Cardiac septum (tissue), 1 donor: ENCODE measurements at regions of chr22 and their contacts with region 1.

Region 1: DNA sequence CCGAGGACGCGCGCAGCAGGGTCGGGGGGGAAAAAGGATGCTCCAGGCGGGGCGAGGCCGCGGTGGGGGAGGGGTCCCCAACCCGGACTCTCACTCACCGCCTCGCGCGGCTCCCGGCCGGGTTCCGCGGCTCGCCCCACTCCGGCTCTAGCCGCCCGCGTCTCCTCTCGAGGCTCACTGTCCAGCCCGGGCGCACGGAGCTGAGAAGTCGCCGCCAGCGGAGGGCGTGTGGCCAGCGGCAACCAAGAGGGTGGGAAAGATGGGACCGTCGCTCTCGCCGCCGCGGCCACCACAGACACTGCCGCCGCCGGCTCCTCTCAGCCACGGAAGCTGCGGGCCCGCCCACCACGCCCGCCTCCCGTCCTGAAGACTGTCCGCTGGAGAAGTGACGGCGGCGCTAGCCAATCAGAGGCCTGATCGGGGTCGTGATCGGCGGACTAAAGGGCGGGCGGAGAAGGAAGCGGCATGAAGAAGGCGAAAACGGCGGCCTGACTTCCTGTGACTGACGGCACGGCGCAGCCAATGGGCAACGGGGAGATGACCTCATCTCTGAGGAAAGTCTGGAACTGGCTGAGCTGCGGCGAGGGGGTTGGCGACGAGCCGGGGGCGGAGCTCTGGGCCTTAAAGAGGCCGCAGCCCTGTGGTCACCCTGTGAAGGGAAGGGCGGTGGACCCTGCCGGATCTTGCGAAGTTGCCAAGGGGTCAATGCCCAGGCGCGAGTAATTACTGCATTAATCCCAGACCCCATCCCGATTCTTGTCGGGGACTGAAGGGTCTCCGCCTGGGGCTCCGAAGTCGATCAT is at the start of gene MRTFA:
- DNase-seq: peak; percentile 100
- total RNA-seq, gene MRTFA: 24.3 TPM

Region 2: DNA sequence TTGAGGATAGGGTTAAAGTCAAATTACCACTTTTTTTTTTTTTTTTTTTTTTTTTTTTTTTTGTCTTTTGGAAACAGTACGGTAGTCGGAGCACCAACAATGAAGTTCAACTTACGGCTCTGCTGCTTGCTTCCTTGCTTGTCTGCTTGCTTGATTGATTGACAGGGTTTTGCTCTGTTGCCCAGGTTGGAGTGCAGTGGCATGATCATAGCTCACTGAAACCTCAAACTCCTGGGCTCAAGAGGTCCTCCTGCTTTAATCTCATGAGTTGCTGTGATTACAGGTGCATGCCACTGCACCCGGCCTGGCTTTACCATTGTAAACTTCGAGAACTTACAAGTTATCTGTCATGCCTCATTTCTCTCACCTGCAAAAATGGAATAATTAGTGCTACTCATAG is 260.4 kb before region 1 on chr22:
- intact Hi-C with region 1: loop called (anchors 10 kb)
- DNase-seq: no peak

Region 3: DNA sequence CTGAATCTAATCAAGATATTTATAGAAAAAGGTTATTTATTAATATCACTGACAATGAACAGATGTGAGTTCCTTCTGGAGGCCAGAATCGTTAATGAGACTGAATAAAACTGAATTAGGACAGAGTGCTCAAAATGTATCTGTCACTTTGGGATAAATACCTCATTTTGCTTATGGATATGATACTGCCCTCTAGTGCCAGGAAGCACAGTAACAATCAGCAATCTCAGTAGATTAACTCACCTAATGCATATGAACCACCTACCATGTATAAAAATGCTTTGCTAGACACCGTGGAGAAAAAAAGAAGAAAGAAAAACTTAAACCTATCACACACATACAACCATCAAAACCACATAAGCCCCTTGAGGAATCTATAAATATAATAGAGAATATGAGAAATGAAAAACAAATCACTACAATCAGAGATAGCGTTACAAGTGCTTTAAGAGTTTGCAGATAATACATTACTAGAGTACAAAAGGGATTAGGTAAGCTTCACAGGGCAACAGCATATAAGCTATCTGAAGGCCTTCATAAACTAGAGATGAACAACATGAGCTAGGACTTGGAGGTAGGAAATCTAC is 148.8 kb before region 1 on chr22:
- intact Hi-C with region 1: loop called (anchors 10 kb)
- DNase-seq: no peak

Region 4: DNA sequence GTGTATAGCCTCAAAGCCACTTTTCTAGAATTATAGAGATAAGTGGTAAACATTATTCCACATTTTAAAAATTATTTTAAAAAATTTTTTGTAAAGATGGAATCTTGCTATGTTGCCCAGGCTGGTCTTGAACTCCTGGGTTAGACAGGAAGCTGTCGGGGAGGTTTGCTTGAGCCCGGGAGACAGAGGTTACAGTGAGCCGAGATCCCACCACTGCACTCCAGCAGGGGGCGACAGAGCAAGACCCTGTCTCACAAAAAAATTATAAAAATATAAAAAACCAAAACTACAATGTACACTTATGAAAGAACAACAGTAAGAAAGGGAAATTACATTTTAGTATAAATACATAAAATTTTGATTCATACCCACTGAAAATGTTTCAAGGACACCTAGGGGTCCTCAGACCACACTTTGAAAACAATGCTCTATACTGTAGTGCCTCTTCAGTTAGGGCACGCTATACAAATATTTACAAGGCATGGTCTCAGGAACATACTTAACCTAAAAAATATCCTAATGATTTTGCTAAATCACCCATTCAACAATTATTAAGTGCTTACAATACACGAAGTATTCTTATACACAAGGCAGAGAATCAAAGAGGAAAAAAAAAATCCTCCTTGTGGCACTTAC is 111.2 kb before region 1 on chr22:
- intact Hi-C with region 1: loop called (anchors 5 kb)
- DNase-seq: no peak